Activated CD4-positive, alpha-beta T cell treated with anti-CD3 and anti-CD28 coated beads, Interleukin-2, amount 10 ng/mL, durations not matched to agents 24 days and 14 days (primary cell): ENCODE measurements at regions of chr16 and their contacts with region 1.

Region 1: DNA sequence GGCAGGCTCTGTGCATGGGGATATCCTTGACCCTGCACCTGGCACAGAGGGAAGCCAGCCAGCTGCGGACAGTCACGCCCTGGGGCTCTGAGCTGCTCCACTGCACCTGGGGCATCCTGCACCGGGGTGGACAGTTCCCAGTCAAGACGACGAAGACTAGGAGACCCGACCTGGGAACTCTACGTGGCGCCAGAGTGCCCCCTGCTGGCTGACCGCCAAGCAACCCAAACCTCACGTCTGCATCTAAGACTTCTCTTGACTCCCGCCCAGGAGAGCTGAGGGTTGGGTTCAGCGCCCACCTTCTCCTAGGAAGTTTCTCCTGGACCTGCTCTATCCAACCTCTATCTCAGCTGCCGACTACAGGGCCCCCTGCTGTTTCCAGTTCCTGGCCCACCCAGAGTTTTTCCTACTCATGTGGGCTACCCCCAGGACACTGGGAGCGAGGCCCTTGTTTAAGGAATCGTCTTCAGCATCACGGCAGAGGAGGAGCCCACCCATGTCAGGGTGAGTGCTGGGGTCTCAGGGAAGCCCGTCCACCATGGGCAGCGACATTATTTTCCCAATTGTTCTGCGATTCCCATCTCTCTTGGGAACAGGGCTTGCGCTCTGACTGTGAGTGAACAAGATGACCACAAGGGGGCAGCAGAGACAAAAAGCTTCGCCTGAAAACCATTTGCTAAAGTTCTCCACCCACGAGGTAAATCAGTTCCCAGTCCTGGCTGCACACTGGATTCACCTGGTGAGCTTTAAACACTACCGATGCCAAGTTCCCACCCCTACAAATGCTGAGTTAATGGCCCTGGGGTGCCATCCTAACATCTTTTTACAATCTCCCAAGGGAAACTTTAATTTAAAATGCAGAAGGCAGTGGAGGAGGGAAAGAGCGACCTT is 29.3 kb downstream of the TLE7 start:
- DNase-seq: peak; percentile 89
- H3K4me3 Mint-ChIP-seq: no peak overlapping the region
- H3K27ac Mint-ChIP-seq: no peak overlapping the region
- H3K4me1 Mint-ChIP-seq: peaks cover 7% of the 10 kb centered on the region
- H3K27me3 Mint-ChIP-seq: peaks cover 20% of the 10 kb centered on the region

Region 2: DNA sequence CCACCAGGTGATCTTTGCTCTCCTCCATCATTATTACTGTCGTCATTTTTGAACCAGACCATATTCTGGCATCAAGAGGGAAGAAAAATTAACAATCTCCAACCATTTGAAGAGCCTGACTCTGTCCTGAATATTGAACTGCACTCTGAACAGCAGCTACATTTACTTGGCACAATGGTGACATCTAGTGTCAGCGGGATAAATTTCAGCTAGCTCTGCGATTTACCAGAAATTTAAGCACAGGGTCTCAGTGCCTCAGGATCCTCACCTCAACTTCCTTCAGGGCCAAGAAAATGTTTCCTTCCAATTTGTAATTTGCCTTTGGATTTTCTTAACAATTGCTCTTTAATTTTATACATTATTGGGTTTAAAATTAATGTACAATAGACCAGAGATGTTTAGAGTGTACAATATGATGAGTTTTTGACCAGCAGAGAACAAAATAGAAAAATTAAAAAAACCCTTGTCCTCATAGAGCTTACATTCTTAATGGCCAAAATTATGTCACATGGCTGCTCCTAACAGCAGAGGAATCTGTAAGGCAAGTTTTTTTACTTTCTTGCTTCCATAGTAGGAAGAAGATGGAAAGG is 87.4 kb after region 1 on chr16:
- intact Hi-C with region 1: loop called (anchors 1 kb)
- DNase-seq: peak; percentile 86
- H3K4me3 Mint-ChIP-seq: no peak overlapping the region
- H3K27ac Mint-ChIP-seq: no peak overlapping the region
- H3K4me1 Mint-ChIP-seq: no peaks in the 10 kb centered on the region
- H3K27me3 Mint-ChIP-seq: no peaks in the 10 kb centered on the region

Region 3: GRCh38 chr16:71537643-71538042 is 125.1 kb after region 1 on chr16:
- intact Hi-C with region 1: loop called (anchors 2 kb)
- DNase-seq: peak; percentile 79
- H3K4me3 Mint-ChIP-seq: no peak overlapping the region
- H3K27ac Mint-ChIP-seq: no peak overlapping the region
- H3K4me1 Mint-ChIP-seq: peaks cover 2% of the 10 kb centered on the region
- H3K27me3 Mint-ChIP-seq: peaks cover 6% of the 10 kb centered on the region

Region 4: DNA sequence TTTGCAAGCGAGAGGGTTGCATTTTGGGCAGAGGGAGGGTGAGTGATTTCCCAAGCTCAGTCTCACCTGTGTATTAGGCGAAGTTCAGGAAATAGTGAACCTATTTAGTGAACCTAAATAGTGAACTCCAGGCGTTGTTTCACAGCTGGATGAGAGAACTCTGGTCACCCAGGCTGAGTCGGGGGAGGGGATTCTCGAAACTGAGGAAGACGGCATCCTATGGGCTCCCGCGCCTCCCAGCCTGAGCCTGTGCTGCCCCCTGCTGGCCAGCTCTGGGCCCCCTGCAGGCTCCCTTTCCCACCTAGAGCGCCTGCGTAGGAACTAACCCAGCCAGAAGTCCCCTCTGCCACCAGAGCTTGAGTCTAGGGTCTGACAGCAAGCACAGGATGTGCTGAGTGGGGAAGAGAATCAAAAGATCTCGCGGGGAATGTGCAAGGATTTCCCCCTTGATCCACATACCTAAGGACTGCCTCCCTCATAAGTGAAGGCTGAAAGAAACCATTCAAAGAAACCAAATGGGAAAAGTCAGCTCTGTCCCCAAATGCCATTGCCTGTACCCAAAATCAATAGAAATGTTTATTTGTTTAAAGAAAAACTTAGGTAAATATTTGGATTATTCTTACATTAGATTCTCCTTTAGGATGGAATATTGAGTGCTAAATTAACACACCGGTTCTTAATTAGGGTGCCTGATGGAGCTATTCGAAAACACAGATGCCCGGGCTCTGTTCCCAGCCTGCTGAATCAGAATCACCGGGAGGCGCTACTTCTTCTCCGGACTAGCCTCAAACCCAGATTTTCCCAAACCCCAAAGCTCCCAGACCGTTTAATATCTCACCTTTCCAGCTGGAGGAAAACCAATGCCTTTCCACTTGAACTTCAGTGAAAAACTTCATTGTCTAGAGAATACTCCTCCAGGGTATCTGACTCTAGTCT is 198.7 kb after region 1 on chr16:
- intact Hi-C with region 1: loop called (anchors 1 kb)
- DNase-seq: peak; percentile 93
- H3K4me3 Mint-ChIP-seq: peak overlapping the region; percentile 41
- H3K27ac Mint-ChIP-seq: no peak overlapping the region
- H3K4me1 Mint-ChIP-seq: peaks cover 10% of the 10 kb centered on the region
- H3K27me3 Mint-ChIP-seq: peaks cover 4% of the 10 kb centered on the region